ENCODE measurements at regions of chr7 and their contacts with region 1.

Region 1: DNA sequence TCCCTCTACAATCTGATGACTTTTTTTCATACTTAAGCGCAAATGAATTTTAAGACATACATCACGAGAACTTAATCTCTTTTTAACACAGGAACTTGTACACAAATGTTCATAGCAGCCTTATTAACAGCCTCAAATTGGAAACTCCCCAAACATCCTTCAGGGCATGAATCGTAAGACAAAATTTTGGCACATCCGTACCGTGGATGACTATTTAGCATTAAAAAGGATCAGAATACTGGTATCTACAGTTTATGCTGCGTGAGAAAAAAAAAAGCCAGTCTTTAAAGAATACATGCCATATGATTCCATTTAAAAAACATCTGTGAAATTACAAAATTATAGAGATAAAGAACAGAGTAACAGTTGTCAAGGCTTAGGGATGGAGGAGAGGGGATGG is 46.8 kb downstream of the PDE1C start:
- DNase-seq: no peak
- H3K4me3 ChIP-seq: no peak overlapping the region
- H3K27ac ChIP-seq: no peak overlapping the region
- H3K4me1 ChIP-seq: no peaks in the 10 kb centered on the region
- H3K27me3 ChIP-seq: no peaks in the 10 kb centered on the region
- CTCF ChIP-seq: no peak
- POLR2A ChIP-seq: no peak

Region 2: GRCh38 chr7:31957090-31957720 is 66.2 kb before region 1 on chr7:
- intact Hi-C with region 1: loop called in 1 of 2 experiments (anchors 10 kb)
- DNase-seq: no peak
- H3K4me3 ChIP-seq: no peak overlapping the region
- H3K27ac ChIP-seq: no peak overlapping the region
- H3K4me1 ChIP-seq: peaks cover 0 to 8% of the 10 kb centered on the region in 2 donors
- H3K27me3 ChIP-seq: no peaks in the 10 kb centered on the region
- CTCF ChIP-seq: no peak
- POLR2A ChIP-seq: no peak

Region 3: GRCh38 chr7:31971049-31971667 is 52.2 kb before region 1 on chr7:
- intact Hi-C with region 1: loop called in 1 of 2 experiments (anchors 10 kb)
- DNase-seq: no peak
- H3K4me3 ChIP-seq: no peak overlapping the region
- H3K27ac ChIP-seq: no peak overlapping the region
- H3K4me1 ChIP-seq: no peaks in the 10 kb centered on the region
- H3K27me3 ChIP-seq: no peaks in the 10 kb centered on the region
- CTCF ChIP-seq: no peak
- POLR2A ChIP-seq: no peak

Measured in adrenal gland (tissue), 19 donors.